Posterior cingulate gyrus (tissue), 11 donors: ENCODE measurements at regions of chr3 and their contacts with region 1.

Region 1: GRCh38 chr3:150183678-150184425 is 213.2 kb upstream of the PFN2 start:
- DNase-seq: peak; percentile 66 to 96 (median 78)

Region 2: DNA sequence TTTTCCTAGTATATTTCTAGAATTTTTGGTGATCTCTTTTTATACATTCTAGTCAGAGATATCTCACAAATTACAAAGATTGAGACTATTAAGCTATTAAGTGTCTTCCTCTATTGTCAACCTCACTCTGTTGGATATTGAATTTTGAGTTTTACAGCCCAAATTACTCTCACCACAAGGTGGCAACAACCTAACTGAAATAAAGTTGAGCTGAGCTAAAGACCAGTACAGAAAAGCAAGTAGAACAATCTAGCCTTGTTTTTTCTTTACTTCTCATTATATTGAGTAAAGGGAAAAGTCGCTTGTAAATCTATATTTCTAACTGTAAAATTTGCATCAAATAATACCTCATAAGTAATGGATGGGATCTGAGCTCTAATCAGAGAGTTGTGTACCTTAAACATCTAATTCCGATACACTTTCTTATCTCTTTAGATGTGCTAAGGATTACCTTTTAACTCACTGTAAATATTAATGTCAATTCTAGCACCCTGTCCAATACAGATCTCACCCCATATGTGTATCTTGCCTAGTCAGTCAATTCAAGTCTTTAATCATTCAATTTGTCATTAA is 418.0 kb before region 1 on chr3:
- intact Hi-C with region 1: loop called (anchors 10 kb)
- DNase-seq: no peak